Mammary epithelial cell (primary cell): ENCODE measurements at regions of chr3 and their contacts with region 1.

Region 1: DNA sequence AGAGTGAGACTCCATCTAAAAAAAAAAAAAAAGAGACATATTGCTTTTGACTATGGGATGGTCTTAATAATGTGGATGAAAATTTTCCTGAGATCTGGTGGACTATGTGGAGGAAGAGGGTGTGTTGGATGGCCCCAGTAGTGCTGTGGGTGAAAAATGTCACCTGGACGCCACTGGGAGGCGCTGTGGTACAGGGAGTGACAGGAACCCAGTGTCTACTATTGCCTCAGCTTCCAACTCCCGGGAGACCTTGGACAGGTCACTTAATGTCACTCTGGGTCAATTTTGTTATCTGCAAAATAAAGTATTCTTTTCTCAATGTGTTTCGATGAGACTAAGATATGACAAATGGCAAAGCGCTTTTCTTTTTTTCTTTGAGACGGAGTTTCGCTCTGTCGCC is 27.7 kb upstream of the DCP1A start:
- DNase-seq: peak; percentile 28
- H3K4me3 ChIP-seq: no peak overlapping the region
- H3K27ac ChIP-seq: no peak overlapping the region
- H3K4me1 ChIP-seq: no peaks in the 10 kb centered on the region
- H3K27me3 ChIP-seq: no peaks in the 10 kb centered on the region
- CTCF ChIP-seq: peak; percentile 93 to 94

Region 2: GRCh38 chr3:51879937-51880336 is 1495.1 kb before region 1 on chr3:
- CTCF ChIA-PET with region 1: no interaction called
- dilution Hi-C with region 1: no loop called
- in situ Hi-C with region 1: no loop called
- intact Hi-C with region 1: no loop called
- DNase-seq: no peak
- H3K4me3 ChIP-seq: no peak overlapping the region
- H3K27ac ChIP-seq: no peak overlapping the region
- H3K4me1 ChIP-seq: no peaks in the 10 kb centered on the region
- H3K27me3 ChIP-seq: no peaks in the 10 kb centered on the region
- CTCF ChIP-seq: no peak

Region 3: GRCh38 chr3:53513556-53514190 is 138.7 kb after region 1 on chr3:
- CTCF ChIA-PET with region 1: no interaction called
- dilution Hi-C with region 1: no loop called
- in situ Hi-C with region 1: no loop called
- intact Hi-C with region 1: loop called (anchors 1 kb)
- DNase-seq: peak; percentile 35
- H3K4me3 ChIP-seq: no peak overlapping the region
- H3K27ac ChIP-seq: no peak overlapping the region
- H3K4me1 ChIP-seq: no peaks in the 10 kb centered on the region
- H3K27me3 ChIP-seq: no peaks in the 10 kb centered on the region
- CTCF ChIP-seq: peak; percentile 41 to 50